Activated T-helper 1 cell treated with anti-CD3 and anti-CD28 coated beads, Interleukin-12 subunit alpha, Interleukin-12 subunit beta, Interleukin-2, Interleukin-4 antibody, amounts not matched to agents 30 ng/mL and 10 ng/mL and 1 ng/mL, durations not matched to agents 14 hours and 24 hours and 36 hours (primary cell): ENCODE measurements at regions of chr10 and their contacts with region 1.

Region 1: DNA sequence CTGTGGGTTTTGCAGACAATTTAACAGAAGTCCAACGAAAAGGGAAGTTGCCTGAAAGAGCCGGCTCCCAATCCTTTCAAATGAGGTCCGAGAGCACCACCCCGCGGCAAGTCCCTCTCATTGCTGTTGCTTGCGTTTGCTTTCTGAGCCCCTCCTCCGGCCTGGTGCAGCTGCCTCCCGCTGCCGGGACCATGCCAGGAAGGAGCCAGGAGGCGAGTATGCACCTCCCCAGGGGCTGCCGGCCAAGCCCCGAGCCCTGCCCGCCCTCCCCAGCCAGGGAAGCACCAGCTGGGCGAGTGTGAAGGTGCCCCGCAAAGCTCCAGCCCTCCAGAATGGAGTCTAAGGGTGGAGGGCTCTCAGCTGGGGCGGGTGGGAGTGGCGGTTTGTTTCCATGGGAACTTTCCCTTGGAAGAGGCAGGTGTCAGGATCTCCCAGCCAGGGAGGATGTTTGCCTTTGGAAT is 25.8 kb upstream of the PPP2R2D start:
- DNase-seq: peak; percentile 25
- H3K4me3 Mint-ChIP-seq: no peak overlapping the region
- H3K27ac Mint-ChIP-seq: no peak overlapping the region
- H3K4me1 Mint-ChIP-seq: no peaks in the 10 kb centered on the region
- H3K27me3 Mint-ChIP-seq: peaks cover 10% of the 10 kb centered on the region

Region 2: DNA sequence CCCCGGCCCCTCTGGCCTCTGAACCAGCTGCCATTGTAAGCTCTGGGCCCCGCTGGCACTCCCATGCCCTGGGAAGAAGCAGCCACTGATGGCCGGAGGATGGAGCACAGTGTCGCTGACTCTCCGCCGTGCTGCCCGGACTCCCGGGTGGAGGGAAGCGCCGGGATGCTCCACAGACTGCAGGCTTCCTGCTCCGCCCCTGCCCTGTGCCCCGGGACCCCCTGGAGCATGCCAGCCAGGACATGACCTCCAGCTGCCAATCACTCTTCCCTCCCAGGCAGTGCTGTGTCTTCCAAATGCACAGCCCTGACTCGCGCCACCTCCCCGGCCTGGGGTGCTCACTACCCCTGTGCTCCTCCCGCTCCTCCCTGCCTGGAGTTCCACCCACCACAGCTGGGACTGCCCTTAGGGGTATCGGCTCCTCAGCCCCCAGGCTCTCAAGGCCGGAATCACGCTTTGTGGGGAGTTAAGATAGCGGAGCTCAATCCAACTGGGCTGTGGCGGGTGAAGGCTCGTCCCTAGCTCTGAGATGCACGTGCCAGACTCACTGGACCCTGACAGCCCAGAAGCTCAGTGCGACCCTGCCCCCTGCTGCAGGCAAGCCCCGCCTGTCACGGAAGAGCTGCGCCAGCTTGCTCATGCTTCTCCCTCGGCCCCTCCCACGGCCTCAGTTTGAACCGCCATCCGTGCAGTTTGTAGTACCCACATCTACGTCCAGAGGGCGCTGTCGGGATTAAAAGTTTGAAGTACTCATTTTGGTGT is 421.2 kb before region 1 on chr10:
- intact Hi-C with region 1: loop called (anchors 2 kb)
- DNase-seq: peak; percentile 47
- H3K4me3 Mint-ChIP-seq: no peak overlapping the region
- H3K27ac Mint-ChIP-seq: no peak overlapping the region
- H3K4me1 Mint-ChIP-seq: no peaks in the 10 kb centered on the region
- H3K27me3 Mint-ChIP-seq: peaks cover 9% of the 10 kb centered on the region

Region 3: GRCh38 chr10:131900350-131901146 is 25.5 kb after region 1 on chr10 and contains the start of gene PPP2R2D:
- intact Hi-C with region 1: no loop called
- DNase-seq: peak; percentile 95
- H3K4me3 Mint-ChIP-seq: peak within 1 kb of the TSS; percentile 91
- H3K27ac Mint-ChIP-seq: peak within 1 kb of the TSS; percentile 83
- H3K4me1 Mint-ChIP-seq: peaks cover 55% of the 10 kb centered on the region
- H3K27me3 Mint-ChIP-seq: peaks cover 18% of the 10 kb centered on the region
- total RNA-seq, gene PPP2R2D: 37.6 and 38.4 TPM in 2 replicates